Motor neuron (in vitro differentiated cells): ENCODE measurements at regions of chr21 and their contacts with region 1.

Region 1: DNA sequence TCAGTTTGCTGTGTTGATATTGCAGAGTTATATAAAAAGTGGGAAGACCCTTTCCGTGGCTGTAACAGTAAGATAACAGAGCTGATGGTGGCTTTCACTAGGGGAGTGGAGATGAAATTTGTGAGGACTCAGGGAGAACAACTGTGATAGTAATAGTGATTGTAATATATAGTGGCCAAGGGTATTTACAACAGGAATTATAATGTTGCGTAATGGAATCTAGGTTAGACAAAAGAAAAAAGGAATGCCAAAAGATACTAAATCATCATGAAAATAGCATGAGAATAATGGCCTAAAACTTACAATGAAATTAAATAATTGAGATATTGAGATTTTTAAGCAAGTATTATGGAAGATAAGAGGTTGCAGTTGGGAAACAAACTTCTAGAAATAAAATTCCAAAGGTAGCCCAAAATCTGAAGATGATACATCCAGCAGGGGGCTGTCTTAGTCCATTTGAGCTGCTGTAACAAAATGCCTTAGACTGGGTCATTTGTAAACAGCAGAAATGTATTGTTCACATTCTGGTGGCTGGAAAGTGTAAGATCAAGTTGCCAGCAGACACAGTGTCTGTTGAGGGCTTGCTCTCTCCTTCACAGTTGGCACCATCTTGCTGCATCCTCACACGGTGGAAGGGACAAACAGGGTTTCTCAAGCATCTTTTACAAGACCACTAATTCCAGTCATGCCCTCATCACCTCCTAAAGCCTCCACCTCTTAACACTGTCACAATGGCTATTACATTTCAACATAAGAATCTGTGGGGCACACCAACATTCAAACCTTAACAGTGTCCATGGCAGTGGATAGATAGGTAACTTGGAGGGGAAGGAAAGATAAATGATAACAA is 711.2 kb downstream of the MRPL39 start:
- ATAC-seq: peak in 2 of 8 experiments; percentile 36 to 52
- H3K4me3 ChIP-seq: no peak overlapping the region
- H3K27ac ChIP-seq: no peak overlapping the region
- H3K4me1 ChIP-seq: no peaks in the 10 kb centered on the region

Region 2: GRCh38 chr21:23003951-23004350 is 1892.2 kb before region 1 on chr21:
- in situ Hi-C with region 1: no loop called
- ATAC-seq: no peak
- H3K4me3 ChIP-seq: no peak overlapping the region
- H3K27ac ChIP-seq: no peak overlapping the region
- H3K4me1 ChIP-seq: no peaks in the 10 kb centered on the region

Region 3: GRCh38 chr21:25385911-25386474 is 489.9 kb after region 1 on chr21:
- in situ Hi-C with region 1: loop called in 1 of 9 experiments (anchors 25 kb)
- ATAC-seq: peak in 6 of 8 experiments; percentile 46 to 79 (median 54)
- H3K4me3 ChIP-seq: no peak overlapping the region
- H3K27ac ChIP-seq: no peak overlapping the region
- H3K4me1 ChIP-seq: no peaks in the 10 kb centered on the region

Region 4: DNA sequence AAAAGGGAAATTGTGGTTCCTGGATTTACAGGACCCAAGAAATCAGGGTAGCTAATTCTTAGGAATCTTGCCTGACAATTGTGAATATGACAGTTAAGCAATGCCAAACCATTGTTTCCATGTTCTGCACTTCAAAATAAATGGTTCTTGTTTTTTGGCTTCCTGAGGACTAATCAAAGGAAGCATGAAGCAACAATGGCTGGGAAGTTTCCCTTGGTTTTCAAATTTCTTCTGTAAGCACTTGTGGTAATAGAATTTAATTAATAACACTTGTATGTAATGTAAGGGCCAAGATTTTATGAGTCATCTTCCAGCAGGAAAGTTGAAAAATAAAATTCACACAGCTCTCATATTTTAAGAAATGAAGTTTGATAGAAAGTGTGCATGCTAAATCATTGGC is 774.6 kb after region 1 on chr21:
- in situ Hi-C with region 1: no loop called
- ATAC-seq: peak in 2 of 8 experiments; percentile 23 to 42
- H3K4me3 ChIP-seq: no peak overlapping the region
- H3K27ac ChIP-seq: no peak overlapping the region
- H3K4me1 ChIP-seq: no peaks in the 10 kb centered on the region